ENCODE measurements at regions of chr12 and their contacts with region 1.

Region 1: GRCh38 chr12:109093022-109093918 is at the start of gene ALKBH2:
- DNase-seq: peak; percentile 91 to 98 (median 94)
- ATAC-seq: peak; percentile 83
- H3K4me3 ChIP-seq: peak within 1 kb of the TSS; percentile 84
- H3K4me3 Mint-ChIP-seq: peak within 1 kb of the TSS; percentile 91
- H3K27ac ChIP-seq: peak within 1 kb of the TSS; percentile 64 to 66
- H3K27ac Mint-ChIP-seq: peak within 1 kb of the TSS; percentile 87
- H3K4me1 ChIP-seq: peaks cover 41% of the 10 kb centered on the region
- H3K4me1 Mint-ChIP-seq: peaks cover 43% of the 10 kb centered on the region
- H3K27me3 ChIP-seq: no peaks in the 10 kb centered on the region
- H3K27me3 Mint-ChIP-seq: no peaks in the 10 kb centered on the region
- CTCF ChIP-seq: peak; percentile 96
- total RNA-seq, gene ALKBH2: 12.8 to 14.0 TPM

Region 2: DNA sequence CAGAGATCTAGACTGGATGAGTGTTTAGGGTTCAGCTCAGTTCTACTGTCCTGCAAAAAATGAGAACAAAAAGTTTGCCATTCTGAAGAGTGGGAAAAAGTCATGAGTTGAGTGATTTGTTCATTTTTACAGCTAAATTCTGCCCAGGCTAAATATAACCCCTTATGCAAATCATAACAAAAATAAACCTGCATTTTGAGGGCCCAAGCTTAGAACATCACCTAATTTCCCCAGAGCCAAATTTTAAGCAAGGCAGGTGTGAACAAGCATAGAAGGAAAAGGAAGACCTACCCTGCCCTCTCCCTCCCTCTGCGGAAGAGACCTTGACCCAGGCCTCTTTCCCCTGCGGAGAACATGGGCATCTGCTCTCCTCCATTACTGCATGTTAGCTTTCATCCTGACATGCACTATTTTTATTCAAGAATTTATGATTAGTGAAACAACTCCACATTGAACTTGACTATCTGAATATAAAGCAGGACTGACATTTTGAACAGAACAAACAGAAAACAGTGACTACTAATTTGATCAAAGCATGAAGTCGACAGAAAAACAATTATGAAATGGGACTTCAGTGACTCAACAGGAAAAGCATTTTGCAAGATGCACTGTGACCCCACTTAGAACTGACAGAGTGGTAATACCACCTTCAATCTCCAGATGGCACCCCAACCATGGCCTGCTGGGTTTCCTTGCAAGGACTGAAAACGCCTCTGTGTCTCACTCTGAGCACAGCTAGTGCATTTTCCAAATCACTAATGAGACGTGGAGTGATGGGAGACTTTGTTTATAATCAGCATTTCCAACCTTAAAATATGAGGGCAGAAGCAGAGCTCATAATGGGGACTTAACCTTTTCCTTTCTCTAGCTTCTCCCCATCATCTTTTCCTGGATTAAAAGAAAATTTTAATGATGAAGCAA is 428.7 kb before region 1 on chr12:
- CTCF ChIA-PET with region 1: no interaction called
- POLR2A ChIA-PET with region 1: interaction called, 4 read pairs
- intact Hi-C with region 1: loop called (anchors 1 to 5 kb)
- DNase-seq: peak; percentile 69 to 90 (median 79)
- ATAC-seq: peak; percentile 100
- H3K4me3 ChIP-seq: no peak overlapping the region
- H3K4me3 Mint-ChIP-seq: no peak overlapping the region
- H3K27ac ChIP-seq: no peak overlapping the region
- H3K27ac Mint-ChIP-seq: peak overlapping the region; percentile 72
- H3K4me1 ChIP-seq: peaks cover 6% of the 10 kb centered on the region
- H3K4me1 Mint-ChIP-seq: peaks cover 7% of the 10 kb centered on the region
- H3K27me3 ChIP-seq: no peaks in the 10 kb centered on the region
- H3K27me3 Mint-ChIP-seq: no peaks in the 10 kb centered on the region
- CTCF ChIP-seq: peak; percentile 91

Region 3: GRCh38 chr12:108856428-108857157 is 236.7 kb before region 1 on chr12:
- CTCF ChIA-PET with region 1: interaction called, 3 read pairs
- POLR2A ChIA-PET with region 1: interaction called, 10 read pairs
- intact Hi-C with region 1: loop called (anchors 1 to 2 kb)
- DNase-seq: peak in 13 of 14 experiments; percentile 35 to 92 (median 58)
- ATAC-seq: peak; percentile 75
- H3K4me3 ChIP-seq: peak overlapping the region; percentile 72
- H3K4me3 Mint-ChIP-seq: peak overlapping the region; percentile 95
- H3K27ac ChIP-seq: peak overlapping the region in 1 of 2 donors; percentile 22
- H3K27ac Mint-ChIP-seq: peak overlapping the region; percentile 90
- H3K4me1 ChIP-seq: peaks cover 36% of the 10 kb centered on the region
- H3K4me1 Mint-ChIP-seq: peaks cover 42% of the 10 kb centered on the region
- H3K27me3 ChIP-seq: no peaks in the 10 kb centered on the region
- H3K27me3 Mint-ChIP-seq: no peaks in the 10 kb centered on the region
- CTCF ChIP-seq: no peak

Region 4: DNA sequence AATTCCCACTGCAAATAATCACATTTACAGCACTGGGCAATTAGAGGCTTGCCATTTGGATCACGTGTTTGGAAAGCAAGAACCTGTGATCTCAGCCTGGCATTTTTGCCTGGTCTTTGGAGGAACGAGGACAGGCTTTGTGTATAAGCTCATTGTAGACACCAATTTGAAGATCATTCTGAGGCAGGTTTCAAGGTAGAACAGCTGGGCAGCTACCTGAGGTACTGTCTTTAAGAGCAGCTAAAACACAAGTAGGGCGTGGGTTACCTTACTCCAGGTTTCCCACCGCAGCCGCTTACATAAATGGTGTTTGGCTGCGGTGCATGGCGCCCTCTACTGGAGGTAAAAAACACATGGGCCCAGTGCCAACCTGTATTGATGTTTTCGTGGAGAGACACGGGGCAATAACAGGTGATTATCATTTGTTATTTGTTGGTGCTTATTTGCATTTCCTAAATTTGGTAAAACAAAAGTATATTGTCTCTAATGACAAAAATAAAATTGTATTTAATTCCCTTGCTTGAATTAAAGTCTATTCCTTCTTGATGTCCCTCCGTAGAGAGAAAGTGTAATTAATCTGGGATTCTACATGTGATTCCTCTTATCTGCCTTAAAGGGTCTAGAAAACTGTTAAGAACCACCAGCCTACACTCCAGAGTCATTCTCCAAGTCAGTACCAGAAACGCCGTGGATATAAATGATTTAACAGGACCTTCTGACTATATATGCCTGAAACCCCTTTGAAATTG is 142.1 kb before region 1 on chr12:
- CTCF ChIA-PET with region 1: interaction called, 3 read pairs
- POLR2A ChIA-PET with region 1: no interaction called
- intact Hi-C with region 1: loop called (anchors 1 to 5 kb)
- DNase-seq: peak; percentile 47 to 86 (median 59)
- ATAC-seq: peak; percentile 95
- H3K4me3 ChIP-seq: no peak overlapping the region
- H3K4me3 Mint-ChIP-seq: no peak overlapping the region
- H3K27ac ChIP-seq: no peak overlapping the region
- H3K27ac Mint-ChIP-seq: no peak overlapping the region
- H3K4me1 ChIP-seq: peaks cover 4% of the 10 kb centered on the region
- H3K4me1 Mint-ChIP-seq: no peaks in the 10 kb centered on the region
- H3K27me3 ChIP-seq: peaks cover 0 to 3% of the 10 kb centered on the region in 2 experiments
- H3K27me3 Mint-ChIP-seq: peaks cover 24% of the 10 kb centered on the region
- CTCF ChIP-seq: peak; percentile 78

Region 5: DNA sequence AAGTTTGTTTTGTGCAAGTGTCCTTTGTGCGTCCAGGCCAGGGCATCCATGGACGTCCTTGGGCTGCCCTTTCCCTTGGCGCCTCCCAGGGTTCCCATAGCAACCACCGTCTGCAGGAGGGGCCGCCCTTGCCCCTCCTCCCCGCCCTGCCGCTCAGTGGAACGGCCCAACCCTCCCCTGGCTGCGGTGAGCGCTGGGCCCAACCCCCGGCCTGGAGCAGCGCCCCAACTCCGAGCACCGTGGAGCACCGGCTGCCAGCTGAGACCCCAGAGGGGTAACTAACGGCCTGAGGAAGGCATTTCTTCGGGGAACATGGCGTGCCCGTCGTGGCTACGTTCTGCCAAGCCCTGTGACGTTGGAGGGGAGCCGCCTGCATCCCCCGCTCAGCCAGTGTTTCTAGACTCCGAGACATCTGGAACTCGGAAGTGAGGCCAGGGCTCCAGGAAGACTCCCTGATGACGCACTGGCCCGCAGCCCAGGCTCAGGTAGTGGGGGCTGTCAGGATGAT is 17.8 kb after region 1 on chr12:
- CTCF ChIA-PET with region 1: interaction called, 28 read pairs
- POLR2A ChIA-PET with region 1: interaction called, 10 read pairs
- intact Hi-C with region 1: no loop called
- DNase-seq: peak in 13 of 14 experiments; percentile 23 to 79 (median 50)
- ATAC-seq: peak; percentile 83
- H3K4me3 ChIP-seq: peak overlapping the region; percentile 67
- H3K4me3 Mint-ChIP-seq: peak overlapping the region; percentile 88
- H3K27ac ChIP-seq: peak overlapping the region; percentile 56 to 57
- H3K27ac Mint-ChIP-seq: peak overlapping the region; percentile 85
- H3K4me1 ChIP-seq: peaks cover 18% of the 10 kb centered on the region
- H3K4me1 Mint-ChIP-seq: peaks cover 41% of the 10 kb centered on the region
- H3K27me3 ChIP-seq: no peaks in the 10 kb centered on the region
- H3K27me3 Mint-ChIP-seq: no peaks in the 10 kb centered on the region
- CTCF ChIP-seq: no peak

Region 6: DNA sequence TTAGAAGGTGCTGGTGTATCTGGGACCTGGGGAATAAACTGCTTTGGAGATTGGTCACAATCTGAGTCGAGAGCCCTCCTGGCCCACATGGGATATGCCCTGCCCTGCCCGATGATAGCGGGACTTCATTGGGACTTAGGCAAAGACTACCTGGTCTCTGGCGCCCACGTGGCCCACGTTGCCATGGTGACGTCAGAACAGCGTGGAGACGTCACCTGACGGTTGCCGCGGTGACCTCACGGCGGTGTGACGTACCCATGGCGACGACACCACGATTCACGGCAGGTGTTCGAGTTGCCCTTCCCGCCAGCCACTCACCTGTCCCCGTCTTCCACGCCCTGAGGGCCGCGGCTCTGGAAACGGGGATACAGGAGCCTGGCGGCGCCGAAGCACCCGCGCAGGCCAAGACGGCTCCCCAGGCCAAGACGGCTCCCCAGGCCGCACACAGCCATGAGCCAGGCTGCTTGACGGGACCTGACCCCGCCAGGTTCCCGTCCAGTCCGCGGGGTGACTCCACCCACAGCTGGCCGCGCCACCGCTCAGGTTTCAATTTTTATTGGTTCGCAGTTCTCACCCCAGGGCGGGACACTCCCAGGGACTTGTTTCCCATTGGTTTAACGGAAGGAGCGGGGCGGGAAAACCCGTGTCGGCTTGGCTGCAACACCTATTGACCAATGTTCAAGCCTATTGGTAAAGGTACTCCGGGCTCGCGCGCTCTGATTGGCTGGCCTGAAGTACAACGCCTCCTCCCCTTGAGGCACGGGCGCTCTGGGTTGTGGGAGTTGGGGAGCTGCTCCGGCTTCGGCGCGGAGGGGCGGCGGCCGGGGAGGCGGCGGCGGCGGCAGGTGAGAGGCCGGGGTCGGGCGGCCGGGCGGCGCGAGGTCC is 480.0 kb after region 1 on chr12 and contains the starts of genes MMAB and MVK:
- CTCF ChIA-PET with region 1: no interaction called
- POLR2A ChIA-PET with region 1: no interaction called
- intact Hi-C with region 1: loop called in 1 of 2 experiments (anchors 5 kb)
- DNase-seq: peak; percentile 95 to 100 (median 98)
- ATAC-seq: peak; percentile 91
- H3K4me3 ChIP-seq: peak within 1 kb of the TSS; percentile 78
- H3K4me3 Mint-ChIP-seq: peak within 1 kb of the TSS; percentile 99
- H3K27ac ChIP-seq: peak within 1 kb of the TSS; percentile 83 to 96
- H3K27ac Mint-ChIP-seq: peak within 1 kb of the TSS; percentile 95
- H3K4me1 ChIP-seq: peaks cover 19% of the 10 kb centered on the region
- H3K4me1 Mint-ChIP-seq: peaks cover 29% of the 10 kb centered on the region
- H3K27me3 ChIP-seq: no peaks in the 10 kb centered on the region
- H3K27me3 Mint-ChIP-seq: no peaks in the 10 kb centered on the region
- CTCF ChIP-seq: no peak
- total RNA-seq, gene MMAB: 8.6 to 9.2 TPM
- total RNA-seq, gene MVK: 8.2 to 8.4 TPM

Region 7: DNA sequence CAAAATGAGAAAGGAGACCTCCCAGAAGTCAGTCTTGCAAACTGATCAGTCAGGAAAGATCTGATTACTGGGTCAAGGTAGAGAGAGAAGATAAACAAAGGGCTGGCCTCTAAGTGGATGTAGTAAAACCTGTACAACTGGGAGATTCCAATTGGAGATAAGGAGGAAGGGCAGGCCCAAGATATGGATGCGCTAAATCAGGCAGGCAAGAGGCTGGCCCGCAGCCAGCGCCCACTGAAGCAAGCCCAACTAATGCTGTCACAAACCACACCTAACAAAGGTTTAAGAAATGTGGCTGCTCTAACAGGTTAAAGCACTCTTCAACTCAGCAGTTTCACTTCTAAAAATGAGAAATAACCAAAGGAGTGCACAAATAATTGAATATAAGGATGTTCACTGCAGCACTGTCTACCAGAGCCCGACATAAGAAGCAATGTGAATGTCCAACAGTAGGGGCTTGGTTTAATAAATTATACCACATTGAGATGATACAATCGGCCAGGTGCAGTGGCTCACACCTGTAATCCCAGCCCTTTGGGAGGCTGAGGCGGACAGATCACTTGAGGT is 782.4 kb after region 1 on chr12:
- CTCF ChIA-PET with region 1: no interaction called
- POLR2A ChIA-PET with region 1: no interaction called
- intact Hi-C with region 1: no loop called
- DNase-seq: no peak
- ATAC-seq: no peak
- H3K4me3 ChIP-seq: no peak overlapping the region
- H3K4me3 Mint-ChIP-seq: peak overlapping the region; percentile 13
- H3K27ac ChIP-seq: no peak overlapping the region
- H3K27ac Mint-ChIP-seq: no peak overlapping the region
- H3K4me1 ChIP-seq: peaks cover 31% of the 10 kb centered on the region
- H3K4me1 Mint-ChIP-seq: peaks cover 62% of the 10 kb centered on the region
- H3K27me3 ChIP-seq: no peaks in the 10 kb centered on the region
- H3K27me3 Mint-ChIP-seq: no peaks in the 10 kb centered on the region
- CTCF ChIP-seq: no peak